AG04450 (cell line): ENCODE measurements at regions of chr11 and their contacts with region 1.

Region 1: DNA sequence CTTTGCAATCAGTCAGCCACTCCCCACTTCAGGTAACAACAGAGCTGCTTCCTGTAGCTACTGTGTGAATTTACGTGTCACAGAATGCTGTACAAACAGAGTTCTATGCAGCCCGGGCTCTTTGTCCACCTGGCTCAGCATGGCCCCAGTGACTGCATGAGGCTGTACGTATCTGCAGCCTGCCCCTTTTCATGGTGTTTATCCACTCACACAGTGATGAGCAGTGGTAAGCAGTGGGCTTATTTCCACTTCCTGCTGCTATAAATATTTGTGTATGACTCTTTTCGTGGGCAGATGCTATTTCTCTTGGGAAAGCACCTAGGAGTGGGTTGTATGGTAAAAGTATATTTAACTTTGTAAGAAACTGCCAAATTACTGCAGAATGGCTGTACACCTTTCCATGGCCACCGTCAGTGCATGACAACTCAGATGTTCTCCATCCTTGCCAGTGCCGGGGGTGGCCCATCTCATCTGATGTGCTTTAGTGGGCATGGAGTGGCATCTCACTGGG is 43.3 kb downstream of the MYEOV start:
- DNase-seq: peak; percentile 74
- H3K4me3 ChIP-seq: no peak overlapping the region
- H3K27ac ChIP-seq: no peak overlapping the region
- H3K27me3 ChIP-seq: no peaks in the 10 kb centered on the region
- CTCF ChIP-seq: no peak

Region 2: DNA sequence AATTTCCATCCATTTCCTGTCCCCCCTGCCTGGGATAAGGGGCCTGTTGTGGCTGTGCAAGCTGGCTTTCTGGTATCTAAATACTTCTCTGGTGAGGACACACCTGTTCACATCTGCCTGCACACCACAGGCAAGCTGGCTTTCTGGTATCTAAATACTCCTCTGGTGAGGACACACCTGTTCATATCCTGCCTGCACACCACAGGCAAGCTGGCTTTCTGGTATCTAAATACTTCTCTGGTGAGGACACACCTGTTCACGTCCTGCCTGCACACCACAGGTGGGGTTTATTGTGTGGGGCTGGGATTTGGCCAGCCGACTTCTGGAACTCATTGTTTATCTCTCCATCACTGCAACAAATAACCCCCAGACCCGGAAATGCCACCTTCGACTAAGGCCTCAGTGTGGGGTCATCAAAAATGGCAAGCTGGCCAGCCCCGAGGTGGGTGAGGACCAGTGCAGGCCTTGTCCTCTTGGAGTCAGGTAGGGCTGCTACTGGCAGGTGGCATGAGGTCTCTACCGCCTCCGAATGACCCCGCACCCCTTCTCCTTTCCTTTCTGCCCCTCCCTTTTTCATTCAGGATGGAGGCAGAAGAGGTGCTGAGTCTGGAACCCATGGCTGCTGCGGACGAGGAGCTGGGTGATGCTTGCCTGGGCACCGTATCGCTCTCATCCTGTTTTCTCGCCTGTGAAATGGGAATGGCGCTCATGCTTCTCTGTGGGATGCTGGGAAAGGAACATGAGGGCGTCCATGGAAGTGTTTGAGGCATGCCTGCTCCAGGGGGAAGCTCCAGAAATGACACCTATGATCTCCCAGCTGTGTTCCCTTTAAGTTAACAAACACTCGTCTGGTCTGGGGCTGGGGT is 86.8 kb before region 1 on chr11:
- CTCF ChIA-PET with region 1: no interaction called
- POLR2A ChIA-PET with region 1: interaction called, 14 read pairs
- DNase-seq: no peak
- H3K4me3 ChIP-seq: no peak overlapping the region
- H3K27ac ChIP-seq: no peak overlapping the region
- H3K27me3 ChIP-seq: peaks cover 4% of the 10 kb centered on the region
- CTCF ChIP-seq: no peak